ENCODE measurements at regions of chr17 and their contacts with region 1.

Region 1: GRCh38 chr17:67546578-67547527 is 169.8 kb downstream of the PITPNC1 start:
- DNase-seq: peak; percentile 35
- H3K4me3 ChIP-seq: no peak overlapping the region
- H3K27ac ChIP-seq: no peak overlapping the region
- H3K4me1 ChIP-seq: peaks cover 12% of the 10 kb centered on the region
- H3K27me3 ChIP-seq: no peaks in the 10 kb centered on the region
- CTCF ChIP-seq: no peak
- POLR2A ChIP-seq: no peak

Region 2: DNA sequence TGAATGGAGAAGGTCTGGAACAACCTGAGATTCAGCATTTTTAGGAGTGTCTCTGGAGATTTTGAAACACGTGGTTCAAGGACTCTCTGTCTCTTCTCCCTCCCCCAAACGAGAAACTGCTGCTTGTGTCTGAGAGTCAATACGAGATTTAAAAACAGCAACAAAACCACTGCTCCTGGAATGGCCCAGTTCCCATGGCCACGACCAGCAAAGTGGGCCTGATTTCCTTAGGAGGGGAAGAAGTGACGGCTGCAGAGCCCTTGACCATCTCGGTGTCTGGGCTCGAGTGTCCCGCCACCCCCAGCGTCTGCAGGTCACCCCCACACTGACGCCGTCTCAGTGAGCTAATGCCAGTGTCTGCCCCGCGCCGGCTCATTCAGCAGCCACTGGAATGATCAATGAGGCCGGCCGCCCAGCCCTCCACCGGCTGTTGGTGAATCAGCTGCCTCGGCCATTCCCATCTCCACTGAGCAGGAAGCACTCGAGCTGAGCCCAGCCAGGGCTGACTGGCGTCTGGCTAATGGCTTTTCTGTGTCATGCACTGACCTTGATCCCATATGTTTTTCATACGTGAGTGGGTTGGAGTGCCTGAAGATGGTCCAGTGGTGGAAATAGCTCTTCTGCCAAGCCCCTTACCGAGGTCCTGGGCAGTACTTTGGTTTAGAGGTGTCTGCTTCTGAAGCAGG is 18.0 kb before region 1 on chr17:
- CTCF ChIA-PET with region 1: interaction called, 4 read pairs
- POLR2A ChIA-PET with region 1: no interaction called
- dilution Hi-C with region 1: no loop called
- intact Hi-C with region 1: loop called (anchors 1 kb)
- DNase-seq: peak; percentile 94
- H3K4me3 ChIP-seq: peak overlapping the region in 2 of 3 experiments; percentile 9 to 38
- H3K27ac ChIP-seq: peak overlapping the region; percentile 88
- H3K4me1 ChIP-seq: peaks cover 11% of the 10 kb centered on the region
- H3K27me3 ChIP-seq: no peaks in the 10 kb centered on the region
- CTCF ChIP-seq: no peak
- POLR2A ChIP-seq: no peak

Region 3: GRCh38 chr17:67534941-67535340 is 11.9 kb before region 1 on chr17:
- CTCF ChIA-PET with region 1: interaction called, 12 read pairs
- POLR2A ChIA-PET with region 1: no interaction called
- dilution Hi-C with region 1: no loop called
- intact Hi-C with region 1: no loop called
- DNase-seq: peak; percentile 8
- H3K4me3 ChIP-seq: no peak overlapping the region
- H3K27ac ChIP-seq: no peak overlapping the region
- H3K4me1 ChIP-seq: peaks cover 2% of the 10 kb centered on the region
- H3K27me3 ChIP-seq: no peaks in the 10 kb centered on the region
- CTCF ChIP-seq: no peak
- POLR2A ChIP-seq: no peak